Mammary epithelial cell (primary cell): ENCODE measurements at regions of chr3 and their contacts with region 1.

Region 1: DNA sequence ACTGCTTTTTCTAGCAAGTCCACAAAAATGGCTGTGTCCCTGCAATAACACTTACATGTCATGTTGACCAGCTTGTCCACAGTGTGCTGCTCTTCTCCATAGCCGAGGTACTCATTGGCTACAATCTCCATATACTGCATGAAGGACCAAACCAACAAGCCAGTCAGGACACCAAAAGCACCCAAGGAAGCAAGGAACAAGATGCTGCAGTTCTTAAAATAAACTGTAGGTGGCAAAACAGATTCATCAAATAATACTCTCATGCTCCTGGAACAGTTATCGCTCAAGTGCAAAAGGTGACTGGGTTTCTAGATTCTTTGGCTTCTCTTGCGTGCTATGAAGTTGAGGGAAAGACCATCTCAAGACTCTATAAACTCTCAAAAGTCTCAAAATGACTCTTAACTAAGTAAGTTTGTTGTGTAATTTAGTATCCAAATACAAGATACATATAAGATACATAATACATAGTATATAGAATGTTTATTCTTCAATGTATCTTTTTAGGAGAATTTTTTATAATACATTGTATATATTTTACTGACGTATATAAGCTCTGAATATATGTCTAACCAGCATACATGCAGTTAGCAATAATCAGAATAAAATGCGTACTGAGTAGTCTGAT is 57.0 kb downstream of the NEK10 start:
- DNase-seq: peak; percentile 65
- H3K4me3 ChIP-seq: no peak overlapping the region
- H3K27ac ChIP-seq: no peak overlapping the region
- H3K4me1 ChIP-seq: peaks cover 16% of the 10 kb centered on the region
- H3K27me3 ChIP-seq: no peaks in the 10 kb centered on the region
- CTCF ChIP-seq: peak; percentile 68 to 72

Region 2: DNA sequence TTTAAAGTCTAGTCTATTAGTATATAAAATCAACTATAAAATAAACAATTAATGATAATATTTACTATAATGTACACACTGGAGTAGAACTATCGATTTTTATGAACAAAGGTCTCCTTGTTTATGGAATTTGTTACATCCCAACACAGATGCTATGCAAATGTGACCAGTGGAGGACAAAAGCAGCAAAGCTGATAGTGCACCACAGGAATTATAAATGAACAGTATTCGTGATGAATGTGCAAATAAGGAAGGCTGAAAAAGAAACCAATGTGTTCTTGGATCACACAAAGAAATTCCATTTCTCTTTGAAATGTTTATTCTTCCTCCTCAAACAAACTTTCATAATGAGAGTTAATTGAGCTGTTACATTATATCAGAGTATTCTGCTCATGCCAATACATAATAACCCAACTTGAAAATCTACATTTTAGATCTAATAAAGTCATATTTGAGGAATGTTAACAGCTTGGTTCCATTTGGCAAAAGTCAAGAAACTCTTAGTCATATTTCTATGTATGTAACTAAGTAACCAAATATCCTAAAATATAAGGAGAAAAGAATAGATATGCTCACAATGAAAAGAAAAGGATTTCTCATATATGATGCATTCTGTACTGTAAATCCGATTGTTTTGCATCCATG is 22.3 kb before region 1 on chr3:
- CTCF ChIA-PET with region 1: interaction called, 14 read pairs
- dilution Hi-C with region 1: no loop called
- in situ Hi-C with region 1: no loop called
- intact Hi-C with region 1: no loop called
- DNase-seq: no peak
- H3K4me3 ChIP-seq: no peak overlapping the region
- H3K27ac ChIP-seq: no peak overlapping the region
- H3K4me1 ChIP-seq: no peaks in the 10 kb centered on the region
- H3K27me3 ChIP-seq: no peaks in the 10 kb centered on the region
- CTCF ChIP-seq: no peak

Region 3: GRCh38 chr3:27357665-27358258 is 45.6 kb after region 1 on chr3:
- CTCF ChIA-PET with region 1: no interaction called
- dilution Hi-C with region 1: no loop called
- in situ Hi-C with region 1: no loop called
- intact Hi-C with region 1: loop called (anchors 2 kb)
- DNase-seq: peak; percentile 38
- H3K4me3 ChIP-seq: no peak overlapping the region
- H3K27ac ChIP-seq: no peak overlapping the region
- H3K4me1 ChIP-seq: peaks cover 11% of the 10 kb centered on the region
- H3K27me3 ChIP-seq: no peaks in the 10 kb centered on the region
- CTCF ChIP-seq: peak; percentile 68 to 72

Region 4: GRCh38 chr3:27467545-27467944 is 155.4 kb after region 1 on chr3:
- CTCF ChIA-PET with region 1: no interaction called
- dilution Hi-C with region 1: no loop called
- in situ Hi-C with region 1: no loop called
- intact Hi-C with region 1: loop called (anchors 5 kb)
- DNase-seq: peak; percentile 14
- H3K4me3 ChIP-seq: no peak overlapping the region
- H3K27ac ChIP-seq: no peak overlapping the region
- H3K4me1 ChIP-seq: no peaks in the 10 kb centered on the region
- H3K27me3 ChIP-seq: no peaks in the 10 kb centered on the region
- CTCF ChIP-seq: peak; percentile 48 to 59